ENCODE measurements at regions of chr7 and their contacts with region 1.

Region 1: DNA sequence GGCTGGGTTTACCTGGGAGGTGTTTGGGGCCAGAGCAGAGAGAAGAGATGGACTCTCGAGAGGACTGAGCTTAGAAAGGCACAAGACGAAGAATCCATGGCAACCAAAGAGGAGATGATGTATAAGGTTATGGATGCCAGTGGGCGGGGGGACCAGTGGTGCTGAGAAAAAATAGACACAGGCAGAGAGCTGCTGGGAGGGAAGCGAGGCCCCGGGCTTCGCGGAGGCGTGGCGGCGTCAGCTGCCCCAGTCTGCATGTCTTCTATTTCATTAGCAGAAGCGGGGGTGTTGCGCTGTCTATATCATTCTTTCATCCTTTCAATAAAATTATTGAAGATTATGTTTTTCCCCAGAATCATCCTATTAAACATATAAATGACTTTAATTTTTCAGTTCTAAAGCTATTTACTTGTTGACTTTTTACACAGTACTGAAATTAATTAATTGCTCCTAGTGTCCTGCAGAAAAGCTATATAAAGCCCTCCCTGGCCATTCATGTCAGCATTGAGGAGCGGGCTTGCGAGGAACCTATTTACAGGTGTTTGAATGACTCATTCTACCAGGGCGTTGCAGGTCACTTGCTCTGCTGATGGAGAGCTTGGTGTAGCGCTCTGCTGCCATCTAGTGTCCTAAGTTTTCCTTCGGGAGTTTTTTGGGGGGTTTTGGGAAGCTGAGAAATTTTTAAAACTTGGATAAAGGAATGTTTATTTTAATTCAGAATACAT is 42.9 kb upstream of the BHLHA15 start:
- DNase-seq: peak; percentile 45 to 79 (median 47)
- H3K4me3 ChIP-seq: no peak overlapping the region
- H3K4me3 Mint-ChIP-seq: no peak overlapping the region
- H3K27ac ChIP-seq: no peak overlapping the region
- H3K27ac Mint-ChIP-seq: peak overlapping the region in 1 of 8 donors; percentile 44
- H3K4me1 ChIP-seq: no peaks in the 10 kb centered on the region
- H3K4me1 Mint-ChIP-seq: peaks cover 0 to 10% (median 8%) of the 10 kb centered on the region in 3 donors
- H3K27me3 ChIP-seq: no peaks in the 10 kb centered on the region
- H3K27me3 Mint-ChIP-seq: no peaks in the 10 kb centered on the region

Region 2: GRCh38 chr7:97798046-97799019 is 370.0 kb before region 1 on chr7:
- CTCF ChIA-PET with region 1: no interaction called
- POLR2A ChIA-PET with region 1: no interaction called
- DNase-seq: no peak
- H3K4me3 ChIP-seq: no peak overlapping the region
- H3K4me3 Mint-ChIP-seq: no peak overlapping the region
- H3K27ac ChIP-seq: no peak overlapping the region
- H3K27ac Mint-ChIP-seq: no peak overlapping the region
- H3K4me1 ChIP-seq: no peaks in the 10 kb centered on the region
- H3K4me1 Mint-ChIP-seq: no peaks in the 10 kb centered on the region
- H3K27me3 ChIP-seq: no peaks in the 10 kb centered on the region
- H3K27me3 Mint-ChIP-seq: peaks cover 19 to 40% of the 10 kb centered on the region in 2 donors

Region 3: GRCh38 chr7:98021588-98022351 is 146.6 kb before region 1 on chr7:
- CTCF ChIA-PET with region 1: interaction called, 175 read pairs
- POLR2A ChIA-PET with region 1: interaction called, 3 read pairs
- DNase-seq: peak; percentile 51 to 81 (median 65)
- H3K4me3 ChIP-seq: no peak overlapping the region
- H3K4me3 Mint-ChIP-seq: no peak overlapping the region
- H3K27ac ChIP-seq: no peak overlapping the region
- H3K27ac Mint-ChIP-seq: no peak overlapping the region
- H3K4me1 ChIP-seq: no peaks in the 10 kb centered on the region
- H3K4me1 Mint-ChIP-seq: peaks cover 0 to 5% (median 3%) of the 10 kb centered on the region in 3 donors
- H3K27me3 ChIP-seq: no peaks in the 10 kb centered on the region
- H3K27me3 Mint-ChIP-seq: peaks cover 10 to 21% of the 10 kb centered on the region in 2 donors

Region 4: DNA sequence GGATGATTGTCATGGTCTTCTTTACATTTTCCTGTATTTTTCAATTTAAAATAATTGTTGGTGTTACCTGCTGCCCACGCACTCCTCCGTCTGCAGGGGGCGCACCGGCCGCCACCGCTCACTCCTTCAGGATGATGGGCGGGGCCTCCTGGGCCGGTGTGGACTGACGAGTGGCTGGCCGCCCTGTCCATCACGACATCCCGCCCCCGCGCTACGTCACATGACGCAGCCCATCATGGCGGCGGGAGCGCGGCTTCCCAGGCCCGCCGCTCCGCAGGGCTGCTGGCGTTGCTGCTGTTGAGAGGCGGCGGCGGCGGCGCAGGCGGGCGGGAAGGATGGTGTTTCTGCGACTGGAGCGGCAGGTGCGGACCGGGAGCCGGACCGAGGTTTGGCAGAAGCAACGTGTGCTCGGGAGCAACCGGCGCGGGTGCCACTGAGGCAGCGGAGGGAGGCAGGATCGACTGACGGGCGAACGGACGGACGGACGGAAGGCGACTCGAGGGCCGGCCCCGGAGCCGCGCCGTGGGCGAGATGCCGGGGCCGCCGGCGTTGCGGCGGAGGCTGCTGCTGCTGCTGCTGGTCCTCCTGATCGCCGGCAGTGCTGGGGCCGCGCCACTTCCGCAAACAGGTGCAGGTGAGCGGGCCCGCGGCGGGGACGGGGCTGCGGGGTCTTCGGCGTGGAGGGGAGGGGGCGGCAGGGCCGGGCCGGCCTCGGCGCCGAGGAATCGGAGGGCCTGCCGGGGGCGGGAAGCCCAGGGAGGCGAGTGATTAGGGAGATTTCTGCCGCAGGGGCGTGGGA is 61.5 kb before region 1 on chr7 and contains the start of gene LMTK2:
- CTCF ChIA-PET with region 1: interaction called, 57 read pairs
- POLR2A ChIA-PET with region 1: no interaction called
- DNase-seq: peak; percentile 94 to 97 (median 95)
- H3K4me3 ChIP-seq: peak within 1 kb of the TSS; percentile 46
- H3K4me3 Mint-ChIP-seq: peak within 1 kb of the TSS; percentile 92 to 99 (median 97)
- H3K27ac ChIP-seq: peak within 1 kb of the TSS; percentile 74
- H3K27ac Mint-ChIP-seq: peak within 1 kb of the TSS; percentile 69 to 98 (median 94)
- H3K4me1 ChIP-seq: peaks cover 31% of the 10 kb centered on the region
- H3K4me1 Mint-ChIP-seq: peaks cover 39 to 55% (median 42%) of the 10 kb centered on the region in 3 donors
- H3K27me3 ChIP-seq: peaks cover 6% of the 10 kb centered on the region
- H3K27me3 Mint-ChIP-seq: peaks cover 6 to 13% of the 10 kb centered on the region in 2 donors
- total RNA-seq, gene LMTK2: 16.0 to 17.1 TPM

Region 5: GRCh38 chr7:98178347-98178746 is 10.0 kb after region 1 on chr7:
- CTCF ChIA-PET with region 1: interaction called, 28 read pairs
- POLR2A ChIA-PET with region 1: no interaction called
- DNase-seq: no peak
- H3K4me3 ChIP-seq: no peak overlapping the region
- H3K4me3 Mint-ChIP-seq: no peak overlapping the region
- H3K27ac ChIP-seq: no peak overlapping the region
- H3K27ac Mint-ChIP-seq: no peak overlapping the region
- H3K4me1 ChIP-seq: no peaks in the 10 kb centered on the region
- H3K4me1 Mint-ChIP-seq: peaks cover 0 to 3% (median 2%) of the 10 kb centered on the region in 3 donors
- H3K27me3 ChIP-seq: no peaks in the 10 kb centered on the region
- H3K27me3 Mint-ChIP-seq: no peaks in the 10 kb centered on the region

Region 6: DNA sequence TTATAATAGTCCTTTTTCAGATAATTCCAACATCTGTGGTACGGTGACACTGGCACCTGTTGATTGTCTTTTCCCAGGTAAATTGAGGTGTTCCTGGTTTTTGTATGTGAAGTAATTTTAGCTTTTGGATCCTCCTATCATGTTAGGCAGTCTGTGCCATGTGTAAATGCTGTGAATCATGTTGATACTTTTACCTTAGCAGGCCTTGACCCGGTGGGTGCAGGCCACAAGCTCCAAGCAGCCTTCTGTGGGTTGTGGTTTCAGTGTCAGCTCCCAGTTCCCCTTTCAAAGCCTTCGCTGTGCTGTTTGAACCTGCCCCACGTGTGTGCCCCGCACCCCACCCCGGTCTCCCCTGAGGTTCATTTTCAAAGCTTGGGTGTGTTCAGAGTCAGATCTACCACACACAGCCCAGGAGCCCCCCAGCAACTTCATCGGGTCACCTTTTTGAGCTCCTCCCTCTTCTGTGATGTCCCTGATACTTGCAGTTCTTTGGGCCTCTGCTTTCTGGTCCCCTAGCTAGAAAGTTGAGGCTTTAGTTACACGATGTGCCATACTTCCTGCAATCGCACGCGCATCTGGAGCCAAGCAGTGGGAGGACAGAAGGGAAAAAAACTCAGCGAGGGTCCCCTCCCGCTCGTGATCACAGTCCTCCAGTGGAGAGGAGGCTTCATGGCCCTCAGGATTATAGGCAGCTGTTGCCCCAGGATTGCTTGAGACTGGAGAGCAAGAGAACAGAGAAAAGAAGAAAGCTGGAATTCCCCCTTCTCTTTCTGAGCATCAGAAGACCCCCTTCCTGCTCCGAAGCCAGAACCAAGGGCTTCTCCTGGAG is 34.2 kb after region 1 on chr7:
- CTCF ChIA-PET with region 1: interaction called, 13 read pairs
- POLR2A ChIA-PET with region 1: interaction called, 3 read pairs
- DNase-seq: peak; percentile 17 to 87 (median 68)
- H3K4me3 ChIP-seq: peak overlapping the region; percentile 24
- H3K4me3 Mint-ChIP-seq: peak overlapping the region; percentile 26 to 88 (median 76)
- H3K27ac ChIP-seq: no peak overlapping the region
- H3K27ac Mint-ChIP-seq: peak overlapping the region; percentile 29 to 98 (median 80)
- H3K4me1 ChIP-seq: peaks cover 50% of the 10 kb centered on the region
- H3K4me1 Mint-ChIP-seq: peaks cover 36 to 61% (median 38%) of the 10 kb centered on the region in 3 donors
- H3K27me3 ChIP-seq: no peaks in the 10 kb centered on the region
- H3K27me3 Mint-ChIP-seq: no peaks in the 10 kb centered on the region

Measured in CD8-positive, alpha-beta memory T cell (primary cell).